ENCODE measurements at regions of chr17 and their contacts with region 1.

Region 1: GRCh38 chr17:76278952-76279741 is 14.0 kb downstream of the UBALD2 start:
- DNase-seq: peak; percentile 70
- H3K4me3 ChIP-seq: no peak overlapping the region
- H3K27ac ChIP-seq: no peak overlapping the region
- H3K4me1 ChIP-seq: no peaks in the 10 kb centered on the region
- H3K27me3 ChIP-seq: no peaks in the 10 kb centered on the region
- CTCF ChIP-seq: peak; percentile 89 to 91
- POLR2A ChIP-seq: no peak

Region 2: GRCh38 chr17:76014184-76014924 is 264.8 kb before region 1 on chr17:
- CTCF ChIA-PET with region 1: interaction called, 27 read pairs
- POLR2A ChIA-PET with region 1: no interaction called
- dilution Hi-C with region 1: no loop called
- intact Hi-C with region 1: loop called (anchors 10 kb)
- DNase-seq: peak; percentile 59
- H3K4me3 ChIP-seq: no peak overlapping the region
- H3K27ac ChIP-seq: no peak overlapping the region
- H3K4me1 ChIP-seq: no peaks in the 10 kb centered on the region
- H3K27me3 ChIP-seq: no peaks in the 10 kb centered on the region
- CTCF ChIP-seq: peak; percentile 89 to 99
- POLR2A ChIP-seq: no peak

Region 3: GRCh38 chr17:76121932-76122430 is 157.2 kb before region 1 on chr17:
- CTCF ChIA-PET with region 1: interaction called, 320 read pairs
- POLR2A ChIA-PET with region 1: interaction called, 5 read pairs
- dilution Hi-C with region 1: no loop called
- intact Hi-C with region 1: loop called (anchors 1 kb)
- DNase-seq: no peak
- H3K4me3 ChIP-seq: peak overlapping the region in 1 of 3 experiments; percentile 8
- H3K27ac ChIP-seq: peak overlapping the region; percentile 14
- H3K4me1 ChIP-seq: peaks cover 3% of the 10 kb centered on the region
- H3K27me3 ChIP-seq: no peaks in the 10 kb centered on the region
- CTCF ChIP-seq: no peak
- POLR2A ChIP-seq: no peak

Region 4: GRCh38 chr17:76153640-76154039 is 125.5 kb before region 1 on chr17:
- CTCF ChIA-PET with region 1: interaction called, 13 read pairs
- POLR2A ChIA-PET with region 1: no interaction called
- dilution Hi-C with region 1: no loop called
- intact Hi-C with region 1: no loop called
- DNase-seq: no peak
- H3K4me3 ChIP-seq: no peak overlapping the region
- H3K27ac ChIP-seq: no peak overlapping the region
- H3K4me1 ChIP-seq: no peaks in the 10 kb centered on the region
- H3K27me3 ChIP-seq: peaks cover 4 to 19% of the 10 kb centered on the region in 2 experiments
- CTCF ChIP-seq: no peak
- POLR2A ChIP-seq: no peak

Region 5: GRCh38 chr17:76219670-76220383 is 59.3 kb before region 1 on chr17:
- CTCF ChIA-PET with region 1: interaction called, 16 read pairs
- POLR2A ChIA-PET with region 1: no interaction called
- dilution Hi-C with region 1: no loop called
- intact Hi-C with region 1: no loop called
- DNase-seq: no peak
- H3K4me3 ChIP-seq: no peak overlapping the region
- H3K27ac ChIP-seq: no peak overlapping the region
- H3K4me1 ChIP-seq: no peaks in the 10 kb centered on the region
- H3K27me3 ChIP-seq: peaks cover 3 to 6% of the 10 kb centered on the region in 2 experiments
- CTCF ChIP-seq: no peak
- POLR2A ChIP-seq: no peak

Region 6: DNA sequence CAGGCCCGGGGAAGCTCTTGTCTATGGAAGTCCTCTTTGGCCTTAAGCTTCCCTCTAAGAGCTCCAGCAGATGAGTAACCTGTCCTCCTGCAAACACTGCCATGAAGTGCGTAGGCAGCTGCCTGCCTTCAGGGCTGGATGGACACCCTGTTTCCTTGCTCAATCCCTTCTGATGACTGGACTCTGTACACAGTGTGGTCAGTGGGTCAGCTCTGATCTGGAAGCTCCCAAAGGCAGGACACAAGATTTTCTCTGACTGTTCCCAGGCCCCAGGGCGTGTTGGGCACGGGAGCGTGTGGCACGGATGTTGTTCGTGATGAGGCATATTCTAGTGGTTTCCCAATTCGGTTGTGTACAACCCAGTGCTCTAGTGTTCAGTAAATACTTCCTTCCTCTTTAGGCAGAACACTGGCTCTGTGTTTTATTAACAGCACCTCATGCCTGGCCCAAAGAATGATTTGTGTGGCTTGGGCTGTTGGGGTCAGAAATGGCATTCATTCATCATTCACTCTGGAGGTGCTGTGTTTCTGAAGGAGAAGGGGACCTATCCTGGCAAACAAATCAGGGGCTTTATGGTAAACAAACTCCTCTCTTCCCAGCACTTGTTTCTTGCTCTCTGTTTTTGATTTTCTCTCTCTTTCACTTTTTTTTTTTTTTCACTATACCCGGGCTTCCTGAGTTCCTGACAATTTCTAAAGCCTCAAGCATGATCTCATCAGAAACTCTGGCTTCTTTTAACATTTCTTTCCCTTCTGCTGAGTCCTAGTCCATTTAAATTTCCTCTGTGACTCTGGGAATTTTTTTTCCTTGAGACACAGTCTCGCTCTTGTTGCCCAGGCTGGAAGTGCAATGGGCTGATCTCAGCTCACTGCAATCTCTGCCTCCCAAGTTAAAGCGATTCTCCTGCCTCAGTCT is 26.9 kb before region 1 on chr17:
- CTCF ChIA-PET with region 1: interaction called, 125 read pairs
- POLR2A ChIA-PET with region 1: interaction called, 4 read pairs
- dilution Hi-C with region 1: no loop called
- intact Hi-C with region 1: loop called (anchors 2 kb)
- DNase-seq: peak; percentile 74
- H3K4me3 ChIP-seq: no peak overlapping the region
- H3K27ac ChIP-seq: peak overlapping the region; percentile 10
- H3K4me1 ChIP-seq: peaks cover 10% of the 10 kb centered on the region
- H3K27me3 ChIP-seq: peaks cover 0 to 3% of the 10 kb centered on the region in 2 experiments
- CTCF ChIP-seq: no peak
- POLR2A ChIP-seq: no peak

Region 7: DNA sequence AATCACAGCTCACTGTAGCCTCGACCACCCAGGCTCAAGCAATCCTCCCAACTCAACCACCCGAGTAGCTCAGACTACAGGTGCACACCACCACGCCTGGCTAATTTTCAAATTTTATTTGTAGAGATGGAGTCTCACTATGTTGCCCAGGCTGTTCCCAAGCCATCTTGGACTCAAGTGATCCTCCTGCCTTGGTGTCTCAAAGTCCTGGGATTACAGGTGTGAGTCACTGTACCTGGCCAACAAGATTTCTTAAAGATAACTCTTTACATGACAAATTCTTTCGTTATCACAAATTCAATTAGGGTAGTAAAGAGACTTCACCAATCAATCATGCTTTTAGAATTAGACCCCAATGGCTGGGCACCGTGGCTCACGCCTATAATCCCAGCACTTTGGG is 62.2 kb after region 1 on chr17:
- CTCF ChIA-PET with region 1: no interaction called
- POLR2A ChIA-PET with region 1: no interaction called
- dilution Hi-C with region 1: no loop called
- intact Hi-C with region 1: no loop called
- DNase-seq: no peak
- H3K4me3 ChIP-seq: no peak overlapping the region
- H3K27ac ChIP-seq: no peak overlapping the region
- H3K4me1 ChIP-seq: no peaks in the 10 kb centered on the region
- H3K27me3 ChIP-seq: no peaks in the 10 kb centered on the region
- CTCF ChIP-seq: no peak
- POLR2A ChIP-seq: no peak

Region 8: GRCh38 chr17:76397687-76398487 is 118.7 kb after region 1 on chr17:
- CTCF ChIA-PET with region 1: interaction called, 16 read pairs
- POLR2A ChIA-PET with region 1: no interaction called
- dilution Hi-C with region 1: no loop called
- intact Hi-C with region 1: no loop called
- DNase-seq: peak; percentile 81
- H3K4me3 ChIP-seq: no peak overlapping the region
- H3K27ac ChIP-seq: no peak overlapping the region
- H3K4me1 ChIP-seq: no peaks in the 10 kb centered on the region
- H3K27me3 ChIP-seq: no peaks in the 10 kb centered on the region
- CTCF ChIP-seq: peak; percentile 92 to 93
- POLR2A ChIP-seq: no peak

Measured in endothelial cell of umbilical vein (primary cell).